ENCODE measurements at regions of chrX and their contacts with region 1.

Region 1: GRCh38 chrX:43557792-43558191 is 98.3 kb upstream of the MAOA start:
- DNase-seq: peak; percentile 31
- ATAC-seq: no peak
- H3K4me3 ChIP-seq: no peak overlapping the region
- H3K27ac ChIP-seq: no peak overlapping the region
- H3K4me1 ChIP-seq: peaks cover 6% of the 10 kb centered on the region
- H3K27me3 ChIP-seq: no peaks in the 10 kb centered on the region
- CTCF ChIP-seq: peak; percentile 69
- EP300 ChIP-seq: no peak
- POLR2A ChIP-seq: no peak
- RAD21 ChIP-seq: peak; percentile 29; the same call in 1 of the 2 replicates

Region 2: GRCh38 chrX:43349363-43349762 is 208.4 kb before region 1 on chrX:
- CTCF ChIA-PET with region 1: interaction called, 10 read pairs
- POLR2A ChIA-PET with region 1: interaction called, 3 read pairs
- in situ Hi-C with region 1: no loop called
- intact Hi-C with region 1: loop called (anchors 1 kb)
- DNase-seq: peak; percentile 44
- ATAC-seq: peak; percentile 79
- H3K4me3 ChIP-seq: no peak overlapping the region
- H3K27ac ChIP-seq: no peak overlapping the region
- H3K4me1 ChIP-seq: no peaks in the 10 kb centered on the region
- H3K27me3 ChIP-seq: no peaks in the 10 kb centered on the region
- CTCF ChIP-seq: peak; percentile 68
- EP300 ChIP-seq: no peak
- POLR2A ChIP-seq: no peak
- RAD21 ChIP-seq: no peak

Region 3: GRCh38 chrX:43741843-43742573 is 184.2 kb after region 1 on chrX:
- CTCF ChIA-PET with region 1: no interaction called
- POLR2A ChIA-PET with region 1: no interaction called
- in situ Hi-C with region 1: loop called (anchors 5 kb)
- intact Hi-C with region 1: no loop called
- DNase-seq: no peak
- ATAC-seq: no peak
- H3K4me3 ChIP-seq: no peak overlapping the region
- H3K27ac ChIP-seq: no peak overlapping the region
- H3K4me1 ChIP-seq: no peaks in the 10 kb centered on the region
- H3K27me3 ChIP-seq: no peaks in the 10 kb centered on the region
- CTCF ChIP-seq: no peak
- EP300 ChIP-seq: no peak
- POLR2A ChIP-seq: no peak
- RAD21 ChIP-seq: no peak

Region 4: GRCh38 chrX:43750248-43750676 is 192.5 kb after region 1 on chrX:
- CTCF ChIA-PET with region 1: interaction called, 49 read pairs
- POLR2A ChIA-PET with region 1: no interaction called
- in situ Hi-C with region 1: loop called (anchors 5 kb)
- intact Hi-C with region 1: loop called (anchors 1 kb)
- DNase-seq: peak; percentile 57
- ATAC-seq: peak; percentile 88
- H3K4me3 ChIP-seq: no peak overlapping the region
- H3K27ac ChIP-seq: no peak overlapping the region
- H3K4me1 ChIP-seq: 0 out of 2 replicates have a peak, but pooled peaks cover 9% of the 10 kb centered on the region
- H3K27me3 ChIP-seq: no peaks in the 10 kb centered on the region
- CTCF ChIP-seq: peak; percentile 77
- EP300 ChIP-seq: no peak
- POLR2A ChIP-seq: no peak
- RAD21 ChIP-seq: peak; percentile 79

Region 5: DNA sequence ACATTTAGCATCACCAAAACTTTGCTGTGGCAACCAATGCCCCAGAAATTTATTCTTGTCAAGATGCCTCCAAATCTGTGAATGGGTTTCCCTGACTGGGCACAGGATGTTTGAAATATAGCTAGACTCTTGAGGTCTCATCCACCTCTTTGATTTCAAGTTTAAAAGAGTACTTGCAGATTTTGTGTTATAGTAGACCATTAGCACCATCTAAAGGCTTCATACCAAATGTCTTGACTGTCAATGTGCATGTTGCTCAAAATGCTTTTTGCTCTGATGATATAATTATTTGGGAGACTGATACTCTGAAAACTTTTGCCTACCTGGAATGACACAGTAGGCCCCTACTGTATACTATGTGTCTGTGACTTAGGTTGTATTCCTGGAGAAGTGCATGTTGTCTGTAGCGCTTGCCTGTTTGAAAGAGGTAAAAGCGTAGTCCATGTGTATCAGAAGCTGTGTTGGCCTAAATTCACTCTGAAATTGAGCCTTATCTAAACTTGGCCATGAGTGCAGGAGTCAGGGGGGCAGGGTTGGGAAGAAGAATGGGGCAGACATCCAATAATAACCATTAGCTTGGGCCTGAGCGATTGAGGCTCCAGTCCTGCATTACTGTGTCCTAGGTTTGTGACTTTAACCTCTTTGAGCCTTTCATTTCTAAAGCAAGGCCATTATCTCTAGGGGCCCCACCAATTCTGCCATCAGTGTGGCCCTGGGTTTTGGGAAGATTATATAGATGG is 381.6 kb after region 1 on chrX:
- CTCF ChIA-PET with region 1: no interaction called
- POLR2A ChIA-PET with region 1: no interaction called
- in situ Hi-C with region 1: loop called (anchors 25 kb)
- intact Hi-C with region 1: loop called (anchors 5 kb)
- DNase-seq: no peak
- ATAC-seq: no peak
- H3K4me3 ChIP-seq: no peak overlapping the region
- H3K27ac ChIP-seq: no peak overlapping the region
- H3K4me1 ChIP-seq: no peaks in the 10 kb centered on the region
- H3K27me3 ChIP-seq: no peaks in the 10 kb centered on the region
- CTCF ChIP-seq: peak; percentile 45
- EP300 ChIP-seq: no peak
- POLR2A ChIP-seq: no peak
- RAD21 ChIP-seq: no peak

Region 6: DNA sequence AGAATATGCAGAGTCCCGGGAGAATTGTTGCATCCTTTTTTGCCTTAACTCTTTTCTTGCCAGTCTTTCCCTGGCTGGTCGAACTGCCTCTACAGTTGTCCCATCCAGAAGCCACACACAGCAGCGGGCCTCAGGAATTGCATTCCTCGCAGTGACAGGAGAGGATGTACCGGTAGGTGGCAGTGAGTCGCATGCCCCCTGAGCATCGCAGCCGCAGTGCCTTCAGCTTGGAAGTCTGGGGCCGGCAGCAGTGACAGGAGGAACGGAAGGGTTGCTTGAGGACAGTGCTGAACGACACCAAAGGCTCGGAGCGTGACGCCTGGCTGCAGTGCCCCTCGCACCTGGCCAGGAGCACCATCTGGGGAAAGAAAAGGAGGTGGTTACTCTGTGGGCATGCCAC is 391.9 kb after region 1 on chrX:
- CTCF ChIA-PET with region 1: no interaction called
- POLR2A ChIA-PET with region 1: no interaction called
- in situ Hi-C with region 1: loop called (anchors 25 kb)
- intact Hi-C with region 1: loop called (anchors 5 kb)
- DNase-seq: peak; percentile 10
- ATAC-seq: peak; percentile 92
- H3K4me3 ChIP-seq: no peak overlapping the region
- H3K27ac ChIP-seq: no peak overlapping the region
- H3K4me1 ChIP-seq: no peaks in the 10 kb centered on the region
- H3K27me3 ChIP-seq: no peaks in the 10 kb centered on the region
- CTCF ChIP-seq: peak; percentile 73
- EP300 ChIP-seq: no peak
- POLR2A ChIP-seq: no peak
- RAD21 ChIP-seq: no peak

Measured in HepG2 (cell line).